ENCODE measurements at regions of chr20 and their contacts with region 1.

Region 1: DNA sequence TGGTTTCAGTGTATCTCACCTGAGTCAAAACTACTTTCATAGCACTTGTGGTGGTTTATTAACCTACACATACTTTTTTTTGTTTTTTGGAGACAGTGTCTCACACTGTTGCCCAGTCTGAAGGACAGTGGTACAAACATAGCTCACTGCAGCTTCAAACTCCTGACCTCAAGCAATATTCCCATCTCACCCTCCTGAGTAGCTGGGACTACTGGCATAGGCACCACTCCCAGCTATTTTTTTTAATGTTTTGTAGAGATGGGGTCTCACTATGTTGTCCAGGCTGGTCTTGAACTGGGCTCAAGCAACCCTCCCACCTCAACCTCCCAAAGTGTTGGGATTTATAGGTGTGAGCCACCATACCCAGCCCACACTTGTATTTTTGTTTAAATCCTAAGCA is 49.7 kb downstream of the STAU1 start:
- DNase-seq: no peak
- ATAC-seq: no peak
- H3K4me3 ChIP-seq: no peak overlapping the region
- H3K4me3 Mint-ChIP-seq: no peak overlapping the region
- H3K27ac ChIP-seq: no peak overlapping the region
- H3K27ac Mint-ChIP-seq: peak overlapping the region in 1 of 2 donors; percentile 43
- H3K4me1 ChIP-seq: peaks cover 0 to under 1% of the 10 kb centered on the region in 2 experiments
- H3K4me1 Mint-ChIP-seq: peaks cover 11 to 15% (median 13%) of the 10 kb centered on the region in 3 donors
- H3K27me3 ChIP-seq: no peaks in the 10 kb centered on the region
- H3K27me3 Mint-ChIP-seq: no peaks in the 10 kb centered on the region

Region 2: GRCh38 chr20:49078296-49078695 is 60.1 kb before region 1 on chr20:
- CTCF ChIA-PET with region 1: no interaction called
- POLR2A ChIA-PET with region 1: interaction called in 1 of 2 experiments, 10 read pairs
- DNase-seq: no peak
- ATAC-seq: no peak
- H3K4me3 ChIP-seq: no peak overlapping the region
- H3K4me3 Mint-ChIP-seq: no peak overlapping the region
- H3K27ac ChIP-seq: no peak overlapping the region
- H3K27ac Mint-ChIP-seq: no peak overlapping the region
- H3K4me1 ChIP-seq: no peaks in the 10 kb centered on the region
- H3K4me1 Mint-ChIP-seq: no peaks in the 10 kb centered on the region
- H3K27me3 ChIP-seq: no peaks in the 10 kb centered on the region
- H3K27me3 Mint-ChIP-seq: no peaks in the 10 kb centered on the region

Region 3: DNA sequence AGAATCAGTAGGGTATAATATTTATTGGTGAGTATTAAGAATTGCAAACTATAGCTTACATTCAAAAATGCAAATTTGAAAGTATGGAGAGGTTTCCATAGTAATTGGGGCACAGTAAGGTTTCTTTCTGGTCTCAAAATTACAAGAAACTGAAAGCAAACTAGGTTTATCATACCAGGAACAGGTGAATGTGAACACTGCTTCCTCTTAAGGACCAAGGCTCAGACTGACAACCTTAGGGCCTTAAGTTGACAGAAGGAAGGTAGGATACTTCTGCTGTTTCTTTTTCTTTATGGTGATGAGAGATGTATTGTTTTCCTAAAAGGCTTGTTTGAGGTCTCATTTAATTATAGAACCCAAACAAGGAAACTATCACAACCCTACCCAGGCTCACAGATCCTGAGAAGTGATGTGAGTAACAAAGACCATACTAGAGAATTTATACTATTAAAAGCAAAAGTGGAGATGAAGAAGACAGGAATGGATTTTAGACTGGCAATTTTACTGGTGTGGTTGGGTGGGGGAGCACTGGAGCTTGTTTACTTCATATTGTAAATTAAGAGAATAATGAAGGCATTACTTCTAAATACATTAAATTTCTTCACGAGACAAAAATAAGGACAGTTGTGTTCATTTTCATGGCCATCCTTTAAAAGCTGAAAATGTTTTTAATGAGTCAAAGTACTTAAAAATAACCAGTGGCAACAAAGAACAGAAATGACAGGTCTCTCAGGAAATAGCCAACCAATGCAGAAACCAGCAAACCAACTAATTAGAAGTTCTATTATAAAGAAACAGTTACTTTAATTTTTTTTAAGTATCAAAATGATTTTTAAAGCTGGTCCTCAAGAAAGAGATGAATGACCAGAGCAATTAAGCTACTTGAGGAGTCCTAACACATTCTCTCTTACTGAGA is 28.4 kb after region 1 on chr20:
- CTCF ChIA-PET with region 1: no interaction called
- POLR2A ChIA-PET with region 1: no interaction called
- DNase-seq: no peak
- ATAC-seq: no peak
- H3K4me3 ChIP-seq: no peak overlapping the region
- H3K4me3 Mint-ChIP-seq: peak overlapping the region in 1 of 3 donors; percentile 20
- H3K27ac ChIP-seq: peak overlapping the region; percentile 15
- H3K27ac Mint-ChIP-seq: peak overlapping the region; percentile 62 to 83
- H3K4me1 ChIP-seq: peaks cover 14 to 18% of the 10 kb centered on the region in 2 experiments
- H3K4me1 Mint-ChIP-seq: peaks cover 62 to 64% (median 64%) of the 10 kb centered on the region in 3 donors
- H3K27me3 ChIP-seq: no peaks in the 10 kb centered on the region
- H3K27me3 Mint-ChIP-seq: no peaks in the 10 kb centered on the region

Measured in T-cell (primary cell).